ENCODE measurements at regions of chr6 and their contacts with region 1.

Region 1: GRCh38 chr6:104859225-104860146 is at the start of gene HACE1:
- H3K4me3 Mint-ChIP-seq: peak within 1 kb of the TSS; percentile 85
- H3K27ac Mint-ChIP-seq: peak within 1 kb of the TSS; percentile 77
- H3K4me1 Mint-ChIP-seq: peaks cover 11% of the 10 kb centered on the region
- H3K27me3 Mint-ChIP-seq: peaks cover 8% of the 10 kb centered on the region

Region 2: GRCh38 chr6:104799134-104799657 is 60.3 kb before region 1 on chr6:
- intact Hi-C with region 1: no loop called
- H3K4me3 Mint-ChIP-seq: no peak overlapping the region
- H3K27ac Mint-ChIP-seq: no peak overlapping the region
- H3K4me1 Mint-ChIP-seq: peaks cover 9% of the 10 kb centered on the region
- H3K27me3 Mint-ChIP-seq: no peaks in the 10 kb centered on the region

Region 3: GRCh38 chr6:104908031-104908882 is 48.8 kb after region 1 on chr6:
- intact Hi-C with region 1: no loop called
- H3K4me3 Mint-ChIP-seq: no peak overlapping the region
- H3K27ac Mint-ChIP-seq: no peak overlapping the region
- H3K4me1 Mint-ChIP-seq: no peaks in the 10 kb centered on the region
- H3K27me3 Mint-ChIP-seq: peaks cover 2% of the 10 kb centered on the region

Region 4: GRCh38 chr6:104973404-104973803 is 113.9 kb after region 1 on chr6:
- intact Hi-C with region 1: no loop called
- H3K4me3 Mint-ChIP-seq: no peak overlapping the region
- H3K27ac Mint-ChIP-seq: no peak overlapping the region
- H3K4me1 Mint-ChIP-seq: no peaks in the 10 kb centered on the region
- H3K27me3 Mint-ChIP-seq: no peaks in the 10 kb centered on the region

Region 5: GRCh38 chr6:105402939-105403935 is 543.8 kb after region 1 on chr6 and contains the start of gene PREP:
- intact Hi-C with region 1: loop called (anchors 5 kb)
- H3K4me3 Mint-ChIP-seq: peak within 1 kb of the TSS; percentile 96
- H3K27ac Mint-ChIP-seq: peak within 1 kb of the TSS; percentile 92
- H3K4me1 Mint-ChIP-seq: peaks cover 37% of the 10 kb centered on the region
- H3K27me3 Mint-ChIP-seq: peaks cover 14% of the 10 kb centered on the region